PC-3 (cell line): ENCODE measurements at regions of chr10 and their contacts with region 1.

Region 1: GRCh38 chr10:60434418-60435046 is 44.9 kb upstream of the ANK3 start:
- DNase-seq: peak; percentile 92
- ATAC-seq: peak; percentile 53
- H3K4me3 ChIP-seq: no peak overlapping the region
- H3K27ac ChIP-seq: no peak overlapping the region
- H3K4me1 ChIP-seq: peaks cover 33% of the 10 kb centered on the region
- H3K27me3 ChIP-seq: no peaks in the 10 kb centered on the region
- CTCF ChIP-seq: peak; percentile 99

Region 2: GRCh38 chr10:60099998-60100747 is 334.4 kb before region 1 on chr10:
- CTCF ChIA-PET with region 1: no interaction called
- POLR2A ChIA-PET with region 1: no interaction called
- intact Hi-C with region 1: loop called (anchors 1 kb)
- DNase-seq: peak; percentile 88
- ATAC-seq: peak; percentile 61
- H3K4me3 ChIP-seq: no peak overlapping the region
- H3K27ac ChIP-seq: no peak overlapping the region
- H3K4me1 ChIP-seq: peaks cover 14% of the 10 kb centered on the region
- H3K27me3 ChIP-seq: no peaks in the 10 kb centered on the region
- CTCF ChIP-seq: peak; percentile 92

Region 3: DNA sequence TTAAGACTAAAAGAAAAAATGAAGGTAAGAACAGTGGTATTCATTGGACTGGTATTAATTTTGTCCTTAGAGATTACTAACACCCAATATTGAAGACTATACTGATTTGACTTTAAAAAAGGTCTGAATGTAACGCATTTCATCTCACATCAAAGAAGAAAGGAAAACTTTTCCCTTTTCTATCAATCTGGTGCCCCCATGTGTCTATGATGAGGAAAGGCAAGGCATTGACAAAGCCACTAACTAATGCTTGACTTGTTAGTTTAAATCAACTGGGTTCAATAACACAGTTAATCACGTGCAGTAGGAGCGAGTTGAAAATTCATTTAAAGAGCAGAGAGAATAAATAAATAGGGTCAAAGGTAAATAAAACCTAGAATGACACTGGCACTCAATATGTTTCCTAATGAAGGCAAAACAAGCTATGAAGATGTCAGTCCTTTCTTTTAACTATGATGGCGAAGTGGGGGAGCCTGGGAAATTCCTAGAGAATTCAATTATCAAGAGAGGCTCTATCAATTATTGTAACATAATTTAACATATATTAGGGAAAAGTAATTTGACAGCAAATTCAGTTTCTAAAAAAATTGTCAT is 225.8 kb before region 1 on chr10:
- CTCF ChIA-PET with region 1: interaction called, 7 read pairs
- POLR2A ChIA-PET with region 1: no interaction called
- intact Hi-C with region 1: loop called (anchors 1 kb)
- DNase-seq: peak; percentile 87
- ATAC-seq: peak; percentile 57
- H3K4me3 ChIP-seq: no peak overlapping the region
- H3K27ac ChIP-seq: no peak overlapping the region
- H3K4me1 ChIP-seq: peaks cover 22% of the 10 kb centered on the region
- H3K27me3 ChIP-seq: no peaks in the 10 kb centered on the region
- CTCF ChIP-seq: peak; percentile 100

Region 4: GRCh38 chr10:60282771-60283353 is 151.7 kb before region 1 on chr10:
- CTCF ChIA-PET with region 1: no interaction called
- POLR2A ChIA-PET with region 1: no interaction called
- intact Hi-C with region 1: loop called (anchors 1 kb)
- DNase-seq: peak; percentile 99
- ATAC-seq: peak; percentile 88
- H3K4me3 ChIP-seq: peak overlapping the region; percentile 55
- H3K27ac ChIP-seq: peak overlapping the region; percentile 93
- H3K4me1 ChIP-seq: peaks cover 46% of the 10 kb centered on the region
- H3K27me3 ChIP-seq: no peaks in the 10 kb centered on the region
- CTCF ChIP-seq: no peak

Region 5: GRCh38 chr10:60343254-60343653 is 91.3 kb before region 1 on chr10:
- CTCF ChIA-PET with region 1: no interaction called
- POLR2A ChIA-PET with region 1: no interaction called
- intact Hi-C with region 1: loop called (anchors 2 kb)
- DNase-seq: peak; percentile 59
- ATAC-seq: peak; percentile 72
- H3K4me3 ChIP-seq: no peak overlapping the region
- H3K27ac ChIP-seq: no peak overlapping the region
- H3K4me1 ChIP-seq: peaks cover 18% of the 10 kb centered on the region
- H3K27me3 ChIP-seq: no peaks in the 10 kb centered on the region
- CTCF ChIP-seq: no peak

Region 6: DNA sequence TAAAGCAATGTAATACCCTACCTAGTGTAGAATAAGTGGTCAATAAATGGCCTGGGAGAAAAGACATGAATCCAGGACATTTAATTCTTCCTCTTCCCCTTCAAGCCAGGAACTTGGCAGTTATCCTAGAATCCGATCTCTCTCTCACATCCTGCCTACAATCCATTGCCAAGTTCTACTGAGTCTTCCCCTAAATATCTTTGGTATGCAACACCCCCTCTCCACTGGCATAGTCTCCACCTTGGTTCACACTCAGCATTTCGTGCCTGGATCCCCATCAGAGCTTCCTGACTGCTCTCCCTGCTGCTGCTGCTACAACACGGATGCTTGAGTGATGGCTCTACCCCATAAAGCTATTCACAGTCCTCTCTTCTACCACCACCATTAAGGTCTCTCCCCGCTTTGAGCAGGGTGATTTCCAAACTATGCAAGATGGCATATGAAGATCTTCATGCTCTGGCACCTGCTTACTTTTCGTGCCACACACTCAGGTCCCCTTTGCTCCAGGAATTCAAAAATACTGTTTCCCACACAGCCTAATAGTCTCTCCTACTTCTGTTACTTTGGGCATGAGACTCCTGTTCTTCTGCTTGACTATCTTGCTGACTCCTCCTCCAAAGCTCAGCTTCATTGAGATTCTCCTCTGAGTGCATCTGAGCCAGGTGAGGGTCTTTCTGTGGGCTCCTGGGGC is 49.7 kb before region 1 on chr10:
- CTCF ChIA-PET with region 1: no interaction called
- POLR2A ChIA-PET with region 1: interaction called, 4 read pairs
- intact Hi-C with region 1: loop called (anchors 2 kb)
- DNase-seq: peak; percentile 100
- ATAC-seq: peak; percentile 89
- H3K4me3 ChIP-seq: peak overlapping the region; percentile 16; the same call in 1 of the 2 replicates
- H3K27ac ChIP-seq: peak overlapping the region; percentile 78
- H3K4me1 ChIP-seq: peaks cover 65% of the 10 kb centered on the region
- H3K27me3 ChIP-seq: no peaks in the 10 kb centered on the region
- CTCF ChIP-seq: no peak